ENCODE measurements at regions of chr7 and their contacts with region 1.

Region 1: DNA sequence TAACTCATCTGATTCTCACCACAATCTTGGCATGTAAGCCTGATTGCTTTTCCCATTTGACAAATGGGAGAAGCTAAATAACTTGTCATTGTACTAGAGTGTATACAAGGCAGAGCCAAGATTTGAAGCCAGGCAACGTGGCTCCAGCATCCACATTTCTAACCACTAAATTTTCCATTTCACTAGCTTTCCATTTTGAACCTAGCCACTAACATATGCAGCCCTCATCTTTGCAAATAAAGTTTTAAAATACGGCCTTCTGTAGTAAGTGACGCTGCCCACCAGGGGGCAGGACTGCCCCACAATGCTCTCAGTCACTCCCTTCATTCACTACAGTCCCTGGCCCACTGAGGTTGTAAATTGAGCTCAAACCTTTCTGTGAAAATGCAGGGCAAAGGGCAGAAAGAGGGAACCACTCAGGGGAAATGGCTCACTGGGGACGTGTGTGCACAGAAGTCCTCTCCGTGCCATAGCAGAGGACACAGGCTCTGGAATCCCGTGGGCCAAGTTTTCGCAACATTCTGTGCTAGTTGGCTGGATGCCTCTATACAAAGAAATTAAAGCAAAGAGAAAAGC is 315.7 kb downstream of the TNS3 start:
- DNase-seq: no peak
- ATAC-seq: peak; percentile 85

Region 2: GRCh38 chr7:47337531-47337930 is 71.3 kb after region 1 on chr7:
- intact Hi-C with region 1: loop called (anchors 5 kb)
- DNase-seq: no peak
- ATAC-seq: peak; percentile 45

Region 3: DNA sequence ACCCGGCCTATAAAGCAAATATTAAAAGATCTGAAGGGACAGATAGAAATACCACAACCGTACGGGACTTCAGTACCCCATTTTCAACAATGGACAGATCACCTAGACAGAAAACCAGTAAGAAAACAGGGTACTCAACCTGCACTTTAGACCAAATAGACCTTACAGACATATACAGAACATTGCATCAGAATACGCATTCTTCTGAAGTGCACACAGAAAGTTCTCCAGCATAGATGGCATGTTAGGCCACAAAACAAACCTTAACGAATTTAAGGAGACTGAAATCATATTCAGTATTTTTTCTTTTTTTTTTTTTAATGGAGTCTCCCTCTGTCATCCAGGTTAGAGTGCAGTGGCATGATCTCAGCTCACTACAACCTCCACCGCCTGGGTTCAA is 164.2 kb after region 1 on chr7:
- intact Hi-C with region 1: loop called (anchors 2 kb)
- DNase-seq: no peak
- ATAC-seq: no peak